IMR-90 (cell line): ENCODE measurements at regions of chr7 and their contacts with region 1.

Region 1: DNA sequence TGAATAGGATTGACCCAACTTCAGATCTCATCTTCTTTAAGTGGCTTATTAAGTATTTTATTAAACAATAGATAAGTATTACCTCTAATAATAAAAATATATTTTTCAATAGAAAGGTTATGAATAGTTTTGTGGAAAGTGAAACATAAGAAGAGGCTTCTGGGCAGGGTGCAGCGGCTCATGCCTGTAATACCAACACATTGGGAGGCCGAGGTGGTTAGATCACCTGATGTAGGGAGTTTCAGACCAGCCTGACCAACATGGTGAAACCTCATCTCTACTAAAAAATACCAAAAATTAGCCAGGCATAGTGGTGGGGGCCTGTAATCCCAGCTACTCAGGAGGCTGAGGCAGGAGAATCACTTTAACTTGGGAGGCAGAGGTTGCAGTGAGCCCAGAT is 26.5 kb downstream of the GPR85 start:
- DNase-seq: no peak
- ATAC-seq: no peak
- H3K4me3 ChIP-seq: no peak overlapping the region
- H3K27ac ChIP-seq: no peak overlapping the region
- H3K4me1 ChIP-seq: no peaks in the 10 kb centered on the region
- H3K27me3 ChIP-seq: no peaks in the 10 kb centered on the region; the same call in 1 of the 2 replicates
- CTCF ChIP-seq: no peak
- POLR2A ChIP-seq: no peak
- RAD21 ChIP-seq: no peak

Region 2: GRCh38 chr7:112515989-112516388 is 544.1 kb before region 1 on chr7:
- CTCF ChIA-PET with region 1: no interaction called
- POLR2A ChIA-PET with region 1: no interaction called
- dilution Hi-C with region 1: no loop called
- in situ Hi-C with region 1: no loop called
- intact Hi-C with region 1: no loop called
- DNase-seq: no peak
- ATAC-seq: no peak
- H3K4me3 ChIP-seq: no peak overlapping the region
- H3K27ac ChIP-seq: no peak overlapping the region
- H3K4me1 ChIP-seq: no peaks in the 10 kb centered on the region
- H3K27me3 ChIP-seq: peaks cover 22% of the 10 kb centered on the region
- CTCF ChIP-seq: 0 out of 2 replicates have a peak, but pooled peaks have one; percentile 4
- POLR2A ChIP-seq: no peak
- RAD21 ChIP-seq: no peak

Region 3: DNA sequence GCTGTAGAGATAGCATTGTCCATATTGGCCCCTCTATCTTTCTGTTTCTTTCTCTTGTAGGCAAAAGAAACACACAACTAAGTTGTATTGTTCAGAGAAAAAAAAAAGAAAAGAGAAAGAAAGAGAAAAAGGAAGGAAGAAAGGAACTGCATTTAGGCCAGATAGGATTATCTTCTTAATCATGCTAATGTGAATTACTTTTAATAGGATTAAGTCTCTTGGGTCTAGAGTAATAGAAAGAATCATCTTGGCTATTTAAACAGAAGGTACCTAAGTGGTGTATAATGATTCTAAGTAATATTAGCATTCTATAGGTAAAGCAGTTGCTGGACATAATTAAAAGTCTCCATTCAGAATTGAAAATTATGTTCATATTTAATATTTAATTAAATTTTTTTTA is 15.7 kb before region 1 on chr7:
- CTCF ChIA-PET with region 1: no interaction called
- POLR2A ChIA-PET with region 1: no interaction called
- dilution Hi-C with region 1: no loop called
- in situ Hi-C with region 1: no loop called
- intact Hi-C with region 1: loop called (anchors 1 kb)
- DNase-seq: no peak
- ATAC-seq: no peak
- H3K4me3 ChIP-seq: no peak overlapping the region
- H3K27ac ChIP-seq: no peak overlapping the region
- H3K4me1 ChIP-seq: no peaks in the 10 kb centered on the region
- H3K27me3 ChIP-seq: peaks cover 1% of the 10 kb centered on the region; the same call in 1 of the 2 replicates
- CTCF ChIP-seq: no peak
- POLR2A ChIP-seq: no peak
- RAD21 ChIP-seq: no peak

Region 4: GRCh38 chr7:113289140-113289740 is 229.1 kb after region 1 on chr7:
- CTCF ChIA-PET with region 1: no interaction called
- POLR2A ChIA-PET with region 1: no interaction called
- dilution Hi-C with region 1: no loop called
- in situ Hi-C with region 1: no loop called
- intact Hi-C with region 1: no loop called
- DNase-seq: peak; percentile 71
- ATAC-seq: peak; percentile 95
- H3K4me3 ChIP-seq: no peak overlapping the region
- H3K27ac ChIP-seq: no peak overlapping the region
- H3K4me1 ChIP-seq: no peaks in the 10 kb centered on the region
- H3K27me3 ChIP-seq: no peaks in the 10 kb centered on the region
- CTCF ChIP-seq: peak; percentile 67
- POLR2A ChIP-seq: no peak
- RAD21 ChIP-seq: peak; percentile 78

Region 5: DNA sequence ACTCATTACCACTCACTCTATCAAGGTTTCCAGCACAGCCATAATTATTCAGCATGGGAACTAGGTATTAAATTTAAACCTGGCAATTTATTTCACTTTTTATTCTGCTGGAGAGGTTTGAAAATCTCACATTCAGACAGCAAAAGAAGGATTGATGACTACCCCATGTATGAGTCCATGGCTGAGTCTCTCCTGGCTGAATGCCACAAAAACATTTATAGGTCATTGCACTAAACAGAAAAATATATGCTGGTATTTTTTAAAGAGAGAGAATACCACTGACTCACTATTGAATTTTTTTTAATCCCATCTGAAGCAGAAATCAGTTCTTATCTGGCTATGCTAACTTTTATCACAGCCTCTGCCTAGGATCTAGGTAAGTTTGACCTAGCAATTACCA is 522.4 kb after region 1 on chr7:
- CTCF ChIA-PET with region 1: no interaction called
- POLR2A ChIA-PET with region 1: no interaction called
- dilution Hi-C with region 1: no loop called
- in situ Hi-C with region 1: no loop called
- intact Hi-C with region 1: no loop called
- DNase-seq: no peak
- ATAC-seq: no peak
- H3K4me3 ChIP-seq: no peak overlapping the region
- H3K27ac ChIP-seq: no peak overlapping the region
- H3K4me1 ChIP-seq: no peaks in the 10 kb centered on the region
- H3K27me3 ChIP-seq: no peaks in the 10 kb centered on the region
- CTCF ChIP-seq: no peak
- POLR2A ChIP-seq: no peak
- RAD21 ChIP-seq: no peak